ENCODE measurements at regions of chr10 and their contacts with region 1.

Region 1: DNA sequence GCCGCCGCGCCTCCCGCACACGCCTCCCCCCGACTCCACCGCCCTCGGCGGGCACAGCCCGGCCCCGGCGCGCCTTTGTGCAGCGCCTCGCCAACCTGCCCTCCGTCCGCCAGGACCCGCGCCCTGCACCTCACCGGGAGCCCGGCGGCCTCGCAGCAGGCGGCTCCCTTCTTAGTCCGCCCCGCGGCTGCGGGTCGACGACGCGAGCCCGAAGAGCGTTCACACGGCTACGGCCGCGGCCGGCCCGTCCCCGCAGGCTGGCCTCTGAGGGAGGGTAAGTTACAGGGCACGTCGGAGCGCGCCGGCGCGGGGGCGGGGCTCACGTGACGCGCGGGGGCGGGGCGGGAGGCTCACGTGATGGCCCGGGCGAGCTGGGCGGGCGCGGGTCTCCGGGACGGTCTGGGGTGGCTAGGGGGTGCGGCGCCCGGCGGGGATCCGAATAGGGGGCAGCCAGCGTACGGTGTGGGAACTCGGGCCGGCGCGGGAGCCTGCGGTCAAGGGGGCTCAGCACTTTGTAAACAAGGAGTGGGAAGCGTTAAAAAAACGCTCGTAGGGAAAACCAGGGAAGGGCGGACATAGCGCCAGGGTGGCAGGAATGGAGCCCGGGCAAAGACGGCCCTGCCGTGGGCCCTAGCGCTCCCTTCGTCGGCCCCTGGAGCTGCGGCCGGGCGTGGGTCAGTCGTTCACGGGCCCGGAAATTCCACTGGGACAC is at the start of gene ARHGAP12:
- DNase-seq: peak; percentile 70 to 92 (median 82)
- ATAC-seq: peak; percentile 63
- H3K4me3 ChIP-seq: peak within 1 kb of the TSS; percentile 99
- H3K4me3 Mint-ChIP-seq: peak within 1 kb of the TSS; percentile 97
- H3K27ac ChIP-seq: peak within 1 kb of the TSS; percentile 69 to 77
- H3K27ac Mint-ChIP-seq: peak within 1 kb of the TSS; percentile 82
- H3K4me1 ChIP-seq: peaks cover 23% of the 10 kb centered on the region
- H3K4me1 Mint-ChIP-seq: peaks cover 53% of the 10 kb centered on the region
- H3K27me3 ChIP-seq: no peaks in the 10 kb centered on the region
- H3K27me3 Mint-ChIP-seq: no peaks in the 10 kb centered on the region
- CTCF ChIP-seq: no peak
- total RNA-seq, gene ARHGAP12: 40.3 to 41.1 TPM

Region 2: DNA sequence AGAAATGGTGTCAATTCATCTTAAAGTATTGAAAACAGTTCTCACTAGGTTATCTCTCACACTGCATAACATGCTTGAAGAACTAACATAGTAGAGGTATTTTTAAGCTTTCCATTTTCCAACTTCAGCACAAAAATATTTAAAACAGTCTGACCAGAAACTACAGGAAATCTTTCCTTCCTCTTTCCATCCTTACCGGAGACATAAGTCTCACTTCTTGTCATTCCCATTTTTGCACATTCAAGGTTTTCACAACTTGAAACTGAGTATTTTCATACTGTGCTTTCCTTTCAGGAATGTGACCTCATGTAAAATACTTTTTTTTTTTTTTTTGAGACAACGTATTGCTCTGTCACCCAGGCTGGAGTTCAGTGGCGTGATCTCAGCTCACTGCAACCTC is 45.3 kb before region 1 on chr10:
- CTCF ChIA-PET with region 1: no interaction called
- POLR2A ChIA-PET with region 1: interaction called, 3 read pairs
- intact Hi-C with region 1: loop called in 1 of 2 experiments (anchors 5 kb)
- DNase-seq: no peak
- ATAC-seq: no peak
- H3K4me3 ChIP-seq: no peak overlapping the region
- H3K4me3 Mint-ChIP-seq: no peak overlapping the region
- H3K27ac ChIP-seq: no peak overlapping the region
- H3K27ac Mint-ChIP-seq: no peak overlapping the region
- H3K4me1 ChIP-seq: no peaks in the 10 kb centered on the region
- H3K4me1 Mint-ChIP-seq: peaks cover 62% of the 10 kb centered on the region
- H3K27me3 ChIP-seq: no peaks in the 10 kb centered on the region
- H3K27me3 Mint-ChIP-seq: no peaks in the 10 kb centered on the region
- CTCF ChIP-seq: no peak

Region 3: DNA sequence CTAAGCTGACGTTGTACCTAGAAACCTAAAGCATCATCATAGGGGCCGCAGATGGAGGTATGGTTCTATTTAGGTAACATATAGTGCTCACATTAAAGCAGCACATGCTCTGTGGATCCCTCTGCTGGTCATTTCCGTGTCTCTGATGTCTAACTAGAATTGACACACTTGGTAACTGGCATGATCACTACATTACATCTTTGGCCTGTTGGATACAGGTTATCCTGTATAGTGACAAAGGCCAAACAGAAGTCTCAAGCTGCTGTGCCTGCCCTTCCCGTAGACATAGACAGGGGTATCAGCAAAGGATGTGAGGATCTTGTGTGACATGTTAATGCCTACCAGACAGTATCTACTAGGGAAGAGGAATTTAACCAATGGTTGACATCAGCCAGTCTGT is 76.3 kb after region 1 on chr10:
- CTCF ChIA-PET with region 1: no interaction called
- POLR2A ChIA-PET with region 1: interaction called, 3 read pairs
- intact Hi-C with region 1: loop called (anchors 2 to 5 kb)
- DNase-seq: peak in 10 of 14 experiments; percentile 2 to 68 (median 34)
- ATAC-seq: peak; percentile 81
- H3K4me3 ChIP-seq: no peak overlapping the region
- H3K4me3 Mint-ChIP-seq: no peak overlapping the region
- H3K27ac ChIP-seq: no peak overlapping the region
- H3K27ac Mint-ChIP-seq: peak overlapping the region; percentile 58
- H3K4me1 ChIP-seq: no peaks in the 10 kb centered on the region
- H3K4me1 Mint-ChIP-seq: peaks cover 16% of the 10 kb centered on the region
- H3K27me3 ChIP-seq: no peaks in the 10 kb centered on the region
- H3K27me3 Mint-ChIP-seq: no peaks in the 10 kb centered on the region
- CTCF ChIP-seq: peak; percentile 67

Region 4: DNA sequence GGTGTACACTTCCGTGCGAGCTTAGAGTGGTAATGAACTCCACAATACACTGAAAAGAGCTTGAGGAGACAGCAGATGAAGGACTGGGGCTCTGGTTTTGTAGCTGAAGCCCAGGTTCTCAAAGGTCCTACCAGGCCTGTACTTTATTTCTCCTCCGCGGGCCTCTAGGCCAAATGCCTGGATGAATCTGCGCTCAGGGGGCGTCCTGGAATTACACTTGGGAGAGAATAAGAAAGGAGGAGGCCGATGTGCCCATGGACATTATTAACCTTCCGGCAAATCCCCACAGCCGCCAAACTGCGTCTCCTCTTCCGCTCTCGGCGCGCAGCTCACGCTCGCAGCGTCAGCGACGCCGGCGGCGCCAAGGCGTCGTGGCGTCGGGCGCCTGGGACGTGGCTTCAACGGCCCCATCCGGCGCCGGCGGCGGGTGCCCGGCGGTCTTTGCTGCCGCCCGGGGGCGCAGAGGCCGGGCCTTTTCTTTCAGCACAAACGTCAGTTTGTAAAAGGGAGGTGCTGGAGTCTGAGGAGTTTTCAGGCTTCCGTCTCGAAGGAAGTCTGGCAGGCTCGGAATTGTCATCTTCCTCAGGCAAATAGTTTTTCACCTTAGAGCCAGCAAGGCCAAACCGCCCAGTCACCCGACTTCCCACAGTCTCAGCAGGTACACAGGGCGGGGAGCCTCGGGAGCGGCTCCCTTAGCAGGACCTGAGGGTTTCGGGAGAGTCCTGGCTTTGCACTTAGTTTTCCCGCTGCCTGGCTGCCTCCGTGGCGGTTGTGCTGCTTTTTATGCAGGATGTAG is 517.2 kb after region 1 on chr10 and contains the start of gene CCDC7:
- CTCF ChIA-PET with region 1: no interaction called
- POLR2A ChIA-PET with region 1: no interaction called
- intact Hi-C with region 1: loop called in 1 of 2 experiments (anchors 10 kb)
- DNase-seq: peak; percentile 74 to 96 (median 82)
- ATAC-seq: peak; percentile 95
- H3K4me3 ChIP-seq: peak within 1 kb of the TSS; percentile 96
- H3K4me3 Mint-ChIP-seq: peak within 1 kb of the TSS; percentile 94
- H3K27ac ChIP-seq: peak within 1 kb of the TSS; percentile 92 to 95
- H3K27ac Mint-ChIP-seq: peak within 1 kb of the TSS; percentile 97
- H3K4me1 ChIP-seq: peaks cover 8% of the 10 kb centered on the region
- H3K4me1 Mint-ChIP-seq: peaks cover 33% of the 10 kb centered on the region
- H3K27me3 ChIP-seq: no peaks in the 10 kb centered on the region
- H3K27me3 Mint-ChIP-seq: no peaks in the 10 kb centered on the region
- CTCF ChIP-seq: peak; percentile 64
- total RNA-seq, gene CCDC7: 69.4 to 72.9 TPM

Region 5: GRCh38 chr10:33155720-33156638 is 1227.3 kb after region 1 on chr10:
- CTCF ChIA-PET with region 1: no interaction called
- POLR2A ChIA-PET with region 1: no interaction called
- intact Hi-C with region 1: no loop called
- DNase-seq: peak in 8 of 14 experiments; percentile 17 to 83 (median 50)
- ATAC-seq: peak; percentile 83
- H3K4me3 ChIP-seq: no peak overlapping the region
- H3K4me3 Mint-ChIP-seq: peak overlapping the region; percentile 26
- H3K27ac ChIP-seq: no peak overlapping the region
- H3K27ac Mint-ChIP-seq: peak overlapping the region; percentile 15
- H3K4me1 ChIP-seq: peaks cover 44% of the 10 kb centered on the region
- H3K4me1 Mint-ChIP-seq: peaks cover 48% of the 10 kb centered on the region
- H3K27me3 ChIP-seq: no peaks in the 10 kb centered on the region
- H3K27me3 Mint-ChIP-seq: no peaks in the 10 kb centered on the region
- CTCF ChIP-seq: peak; percentile 64

Measured in CD4-positive, alpha-beta T cell (primary cell).